ENCODE measurements at regions of chr16 and their contacts with region 1.

Region 1: DNA sequence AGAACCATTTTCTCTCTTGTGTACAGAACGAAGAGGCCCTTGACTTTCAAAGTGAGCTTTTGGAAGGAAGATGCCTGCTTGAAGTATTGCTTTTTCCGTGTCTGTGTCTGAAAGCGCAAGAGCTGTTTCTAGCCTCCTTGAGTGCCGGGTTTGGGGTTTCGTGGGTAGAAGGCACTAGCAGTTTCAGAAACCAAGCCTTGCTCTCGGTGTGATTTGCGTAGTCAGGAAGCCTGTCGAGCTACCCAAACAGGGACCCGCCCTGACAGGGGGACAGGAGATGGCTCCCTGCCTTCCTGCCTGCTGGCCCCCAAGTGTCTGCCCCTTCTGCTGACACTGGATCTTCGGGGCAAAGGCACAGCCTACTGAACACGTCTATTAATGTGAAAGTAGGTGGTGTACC is 322.0 kb downstream of the MAF start:
- DNase-seq: peak; percentile 32 to 80 (median 57)
- ATAC-seq: peak; percentile 87 to 95 (median 92)
- H3K4me3 ChIP-seq: peak overlapping the region; percentile 1 to 30
- H3K4me3 Mint-ChIP-seq: peak overlapping the region; percentile 51 to 70 (median 58)
- H3K27ac ChIP-seq: peak overlapping the region; percentile 62
- H3K27ac Mint-ChIP-seq: peak overlapping the region; percentile 95 to 96
- H3K4me1 ChIP-seq: peaks cover 17 to 59% of the 10 kb centered on the region in 2 experiments
- H3K4me1 Mint-ChIP-seq: peaks cover 51 to 79% (median 58%) of the 10 kb centered on the region in 3 donors
- H3K27me3 ChIP-seq: no peaks in the 10 kb centered on the region
- H3K27me3 Mint-ChIP-seq: peaks cover 1 to 9% of the 10 kb centered on the region in 2 donors

Region 2: DNA sequence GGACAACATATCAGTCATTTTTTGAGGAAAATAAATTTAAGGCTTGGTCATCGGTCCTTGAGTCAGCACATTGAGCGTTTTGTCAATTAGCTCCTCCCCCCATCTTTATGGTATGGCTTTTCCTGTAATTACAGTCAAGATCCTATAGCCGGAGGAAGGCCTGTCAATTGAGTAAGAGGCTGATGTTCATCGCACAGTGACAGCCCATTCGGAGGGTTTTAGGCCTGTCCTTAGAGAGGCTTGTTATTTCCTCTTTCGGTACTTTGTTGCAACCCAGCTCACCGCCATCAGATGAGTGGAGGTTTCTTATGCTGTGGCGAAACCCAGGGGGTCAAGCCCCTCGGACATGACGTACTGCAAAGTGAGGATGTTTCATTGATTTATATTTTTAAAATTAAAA is 783.8 kb before region 1 on chr16:
- CTCF ChIA-PET with region 1: no interaction called
- POLR2A ChIA-PET with region 1: interaction called in 1 of 2 experiments, 10 read pairs
- DNase-seq: no peak
- ATAC-seq: no peak
- H3K4me3 ChIP-seq: no peak overlapping the region
- H3K4me3 Mint-ChIP-seq: no peak overlapping the region
- H3K27ac ChIP-seq: no peak overlapping the region
- H3K27ac Mint-ChIP-seq: no peak overlapping the region
- H3K4me1 ChIP-seq: no peaks in the 10 kb centered on the region
- H3K4me1 Mint-ChIP-seq: no peaks in the 10 kb centered on the region
- H3K27me3 ChIP-seq: no peaks in the 10 kb centered on the region
- H3K27me3 Mint-ChIP-seq: no peaks in the 10 kb centered on the region